ENCODE measurements at regions of chr13 and their contacts with region 1.

Region 1: GRCh38 chr13:109786457-109787134 is at the start of gene IRS2:
- DNase-seq: peak; percentile 90 to 98 (median 94)
- ATAC-seq: peak; percentile 80
- H3K4me3 ChIP-seq: peak within 1 kb of the TSS; percentile 67
- H3K4me3 Mint-ChIP-seq: peak within 1 kb of the TSS; percentile 94
- H3K27ac ChIP-seq: peak within 1 kb of the TSS in 1 of 2 donors; percentile 59
- H3K27ac Mint-ChIP-seq: peak within 1 kb of the TSS; percentile 75
- H3K4me1 ChIP-seq: peaks cover 34% of the 10 kb centered on the region
- H3K4me1 Mint-ChIP-seq: peaks cover 27% of the 10 kb centered on the region
- H3K27me3 ChIP-seq: no peaks in the 10 kb centered on the region
- H3K27me3 Mint-ChIP-seq: peaks cover 4% of the 10 kb centered on the region
- CTCF ChIP-seq: no peak
- total RNA-seq, gene IRS2: 188 to 193 TPM

Region 2: GRCh38 chr13:108218044-108218974 is 1568.3 kb before region 1 on chr13 and contains the start of gene ABHD13:
- CTCF ChIA-PET with region 1: no interaction called
- POLR2A ChIA-PET with region 1: no interaction called
- intact Hi-C with region 1: loop called in 1 of 2 experiments (anchors 5 kb)
- DNase-seq: peak; percentile 78 to 96 (median 88)
- ATAC-seq: peak; percentile 67
- H3K4me3 ChIP-seq: peak within 1 kb of the TSS; percentile 89
- H3K4me3 Mint-ChIP-seq: peak within 1 kb of the TSS; percentile 99
- H3K27ac ChIP-seq: peak within 1 kb of the TSS; percentile 53 to 70
- H3K27ac Mint-ChIP-seq: peak within 1 kb of the TSS; percentile 96
- H3K4me1 ChIP-seq: peaks cover 33% of the 10 kb centered on the region
- H3K4me1 Mint-ChIP-seq: peaks cover 71% of the 10 kb centered on the region
- H3K27me3 ChIP-seq: no peaks in the 10 kb centered on the region
- H3K27me3 Mint-ChIP-seq: no peaks in the 10 kb centered on the region
- CTCF ChIP-seq: no peak
- total RNA-seq, gene ABHD13: 18.0 to 18.6 TPM

Region 3: GRCh38 chr13:109145631-109146030 is 641.0 kb before region 1 on chr13:
- CTCF ChIA-PET with region 1: no interaction called
- POLR2A ChIA-PET with region 1: no interaction called
- intact Hi-C with region 1: loop called (anchors 5 kb)
- DNase-seq: peak in 3 of 14 experiments; percentile 9 to 32 (median 31)
- ATAC-seq: no peak
- H3K4me3 ChIP-seq: no peak overlapping the region
- H3K4me3 Mint-ChIP-seq: no peak overlapping the region
- H3K27ac ChIP-seq: no peak overlapping the region
- H3K27ac Mint-ChIP-seq: no peak overlapping the region
- H3K4me1 ChIP-seq: no peaks in the 10 kb centered on the region
- H3K4me1 Mint-ChIP-seq: no peaks in the 10 kb centered on the region
- H3K27me3 ChIP-seq: peaks cover 7 to 10% of the 10 kb centered on the region in 2 experiments
- H3K27me3 Mint-ChIP-seq: peaks cover 30% of the 10 kb centered on the region
- CTCF ChIP-seq: peak; percentile 29

Region 4: GRCh38 chr13:109191413-109191812 is 595.2 kb before region 1 on chr13:
- CTCF ChIA-PET with region 1: no interaction called
- POLR2A ChIA-PET with region 1: no interaction called
- intact Hi-C with region 1: no loop called
- DNase-seq: no peak
- ATAC-seq: no peak
- H3K4me3 ChIP-seq: no peak overlapping the region
- H3K4me3 Mint-ChIP-seq: no peak overlapping the region
- H3K27ac ChIP-seq: no peak overlapping the region
- H3K27ac Mint-ChIP-seq: no peak overlapping the region
- H3K4me1 ChIP-seq: no peaks in the 10 kb centered on the region
- H3K4me1 Mint-ChIP-seq: no peaks in the 10 kb centered on the region
- H3K27me3 ChIP-seq: no peaks in the 10 kb centered on the region
- H3K27me3 Mint-ChIP-seq: peaks cover 5% of the 10 kb centered on the region
- CTCF ChIP-seq: no peak

Region 5: GRCh38 chr13:109610517-109610916 is 176.1 kb before region 1 on chr13:
- CTCF ChIA-PET with region 1: no interaction called
- POLR2A ChIA-PET with region 1: interaction called, 3 read pairs
- intact Hi-C with region 1: loop called (anchors 1 to 2 kb)
- DNase-seq: peak; percentile 1 to 57 (median 28)
- ATAC-seq: peak; percentile 74
- H3K4me3 ChIP-seq: no peak overlapping the region
- H3K4me3 Mint-ChIP-seq: no peak overlapping the region
- H3K27ac ChIP-seq: no peak overlapping the region
- H3K27ac Mint-ChIP-seq: no peak overlapping the region
- H3K4me1 ChIP-seq: no peaks in the 10 kb centered on the region
- H3K4me1 Mint-ChIP-seq: no peaks in the 10 kb centered on the region
- H3K27me3 ChIP-seq: no peaks in the 10 kb centered on the region
- H3K27me3 Mint-ChIP-seq: no peaks in the 10 kb centered on the region
- CTCF ChIP-seq: peak; percentile 45

Region 6: GRCh38 chr13:110412132-110412914 is 625.7 kb after region 1 on chr13:
- CTCF ChIA-PET with region 1: no interaction called
- POLR2A ChIA-PET with region 1: no interaction called
- intact Hi-C with region 1: loop called in 1 of 2 experiments (anchors 10 kb)
- DNase-seq: peak; percentile 21 to 73 (median 44)
- ATAC-seq: peak; percentile 54
- H3K4me3 ChIP-seq: no peak overlapping the region
- H3K4me3 Mint-ChIP-seq: no peak overlapping the region
- H3K27ac ChIP-seq: no peak overlapping the region
- H3K27ac Mint-ChIP-seq: no peak overlapping the region
- H3K4me1 ChIP-seq: peaks cover 5% of the 10 kb centered on the region
- H3K4me1 Mint-ChIP-seq: no peaks in the 10 kb centered on the region
- H3K27me3 ChIP-seq: peaks cover 18 to 35% of the 10 kb centered on the region in 2 experiments
- H3K27me3 Mint-ChIP-seq: peaks cover 83% of the 10 kb centered on the region
- CTCF ChIP-seq: peak; percentile 80